Calu3 (cell line): ENCODE measurements at regions of chr11 and their contacts with region 1.

Region 1: GRCh38 chr11:127345819-127346459 is 345.4 kb upstream of the KIRREL3 start:
- DNase-seq: peak; percentile 21
- H3K4me3 Mint-ChIP-seq: no peak overlapping the region
- H3K27ac Mint-ChIP-seq: no peak overlapping the region
- H3K4me1 Mint-ChIP-seq: no peaks in the 10 kb centered on the region
- H3K27me3 Mint-ChIP-seq: no peaks in the 10 kb centered on the region
- CTCF ChIP-seq: no peak

Region 2: GRCh38 chr11:126440792-126441514 is 905.0 kb before region 1 on chr11:
- CTCF ChIA-PET with region 1: interaction called, 4 read pairs
- intact Hi-C with region 1: loop called (anchors 5 kb)
- DNase-seq: peak; percentile 81
- H3K4me3 Mint-ChIP-seq: no peak overlapping the region
- H3K27ac Mint-ChIP-seq: no peak overlapping the region
- H3K4me1 Mint-ChIP-seq: no peaks in the 10 kb centered on the region
- H3K27me3 Mint-ChIP-seq: peaks cover 4% of the 10 kb centered on the region
- CTCF ChIP-seq: peak; percentile 82

Region 3: GRCh38 chr11:127003260-127003981 is 342.5 kb before region 1 on chr11:
- CTCF ChIA-PET with region 1: no interaction called
- intact Hi-C with region 1: loop called (anchors 5 kb)
- DNase-seq: peak; percentile 66
- H3K4me3 Mint-ChIP-seq: peak overlapping the region; percentile 65
- H3K27ac Mint-ChIP-seq: no peak overlapping the region
- H3K4me1 Mint-ChIP-seq: peaks cover 11% of the 10 kb centered on the region
- H3K27me3 Mint-ChIP-seq: no peaks in the 10 kb centered on the region
- CTCF ChIP-seq: peak; percentile 47

Region 4: GRCh38 chr11:127017482-127017881 is 328.5 kb before region 1 on chr11:
- CTCF ChIA-PET with region 1: no interaction called
- intact Hi-C with region 1: loop called (anchors 5 kb)
- DNase-seq: peak; percentile 44
- H3K4me3 Mint-ChIP-seq: no peak overlapping the region
- H3K27ac Mint-ChIP-seq: no peak overlapping the region
- H3K4me1 Mint-ChIP-seq: peaks cover 28% of the 10 kb centered on the region
- H3K27me3 Mint-ChIP-seq: peaks cover 11% of the 10 kb centered on the region
- CTCF ChIP-seq: peak; percentile 31

Region 5: DNA sequence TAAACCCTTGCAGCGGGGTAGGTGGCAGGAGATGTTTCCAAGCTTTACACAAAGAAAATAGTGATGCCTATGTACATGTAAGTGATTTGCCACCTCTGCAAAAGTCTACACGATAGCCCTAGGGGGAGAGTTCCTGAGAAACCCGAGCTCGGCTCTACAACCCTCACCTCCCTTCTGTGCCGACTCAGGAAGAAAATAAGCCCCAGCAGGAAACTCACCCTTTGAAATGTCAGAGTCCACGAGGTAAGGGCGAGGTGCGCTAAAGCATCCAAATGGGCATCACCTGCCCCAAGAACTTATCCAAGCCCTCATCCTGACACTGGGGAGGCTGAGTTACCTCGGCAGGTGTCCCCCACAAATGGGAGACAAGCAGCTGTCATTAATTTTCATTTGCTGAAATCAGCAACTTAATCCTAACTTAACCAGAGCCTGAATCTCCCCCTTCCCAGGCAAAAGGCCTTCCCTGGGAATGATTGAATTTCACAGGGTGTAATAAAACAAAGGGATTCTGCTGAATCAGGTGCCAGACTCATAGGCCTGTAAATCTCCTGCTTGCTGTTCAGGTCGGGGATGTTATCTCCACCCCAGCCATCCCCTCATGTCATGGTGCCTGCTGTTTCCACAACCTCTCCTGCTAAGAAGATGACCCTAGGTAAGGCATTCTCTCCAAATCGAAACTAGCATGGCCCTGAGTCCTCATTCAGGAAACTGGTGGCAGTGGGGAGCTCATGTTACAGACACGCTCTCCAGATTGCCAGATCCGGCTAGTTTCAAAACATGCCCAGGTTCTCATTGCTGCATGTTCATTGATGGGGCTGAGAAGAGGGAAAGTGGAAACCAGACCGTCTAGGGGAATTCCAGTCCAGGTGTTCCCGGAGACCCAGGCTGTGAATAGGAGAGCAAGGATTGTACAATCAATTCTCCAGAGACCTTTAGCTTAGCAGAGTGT is 240.1 kb before region 1 on chr11:
- CTCF ChIA-PET with region 1: no interaction called
- intact Hi-C with region 1: loop called (anchors 10 kb)
- DNase-seq: peak; percentile 64
- H3K4me3 Mint-ChIP-seq: no peak overlapping the region
- H3K27ac Mint-ChIP-seq: peak overlapping the region; percentile 69
- H3K4me1 Mint-ChIP-seq: peaks cover 10% of the 10 kb centered on the region
- H3K27me3 Mint-ChIP-seq: no peaks in the 10 kb centered on the region
- CTCF ChIP-seq: no peak